Ascending aorta (tissue), 2 donors: ENCODE measurements at regions of chr4 and their contacts with region 1.

Region 1: GRCh38 chr4:82865592-82865991 is 25.4 kb downstream of the SEC31A start:
- DNase-seq: no peak
- H3K4me3 ChIP-seq: no peak overlapping the region
- H3K27ac ChIP-seq: peak overlapping the region; percentile 50 to 75
- H3K4me1 ChIP-seq: peaks cover 4 to 11% of the 10 kb centered on the region in 2 donors
- H3K27me3 ChIP-seq: no peaks in the 10 kb centered on the region
- CTCF ChIP-seq: no peak

Region 2: DNA sequence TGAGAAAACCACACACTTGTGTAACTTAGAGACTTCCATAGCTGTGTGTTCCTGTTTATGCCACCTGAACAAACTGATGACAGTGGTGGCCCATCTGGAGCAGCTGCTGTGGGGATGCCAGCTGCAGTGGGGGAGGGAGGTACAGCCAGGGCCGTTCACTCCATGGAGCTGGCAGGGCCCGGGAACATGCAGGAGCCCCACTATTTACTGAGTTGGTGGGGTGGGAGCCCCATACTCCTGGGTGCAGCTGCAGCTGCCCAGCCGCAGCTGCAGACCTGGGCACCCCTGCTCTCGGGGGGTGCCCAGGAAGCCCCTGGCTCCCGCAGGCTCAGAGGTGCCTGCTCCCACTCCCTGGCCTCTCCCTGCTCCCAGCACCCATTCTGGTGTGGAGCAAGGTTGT is 995.3 kb before region 1 on chr4:
- intact Hi-C with region 1: no loop called
- DNase-seq: no peak
- H3K4me3 ChIP-seq: no peak overlapping the region
- H3K27ac ChIP-seq: no peak overlapping the region
- H3K4me1 ChIP-seq: no peaks in the 10 kb centered on the region
- H3K27me3 ChIP-seq: no peaks in the 10 kb centered on the region
- CTCF ChIP-seq: no peak

Region 3: GRCh38 chr4:82825425-82825824 is 40.2 kb before region 1 on chr4:
- intact Hi-C with region 1: loop called (anchors 5 kb)
- DNase-seq: no peak
- H3K4me3 ChIP-seq: no peak overlapping the region
- H3K27ac ChIP-seq: no peak overlapping the region
- H3K4me1 ChIP-seq: no peaks in the 10 kb centered on the region
- H3K27me3 ChIP-seq: no peaks in the 10 kb centered on the region
- CTCF ChIP-seq: no peak

Region 4: DNA sequence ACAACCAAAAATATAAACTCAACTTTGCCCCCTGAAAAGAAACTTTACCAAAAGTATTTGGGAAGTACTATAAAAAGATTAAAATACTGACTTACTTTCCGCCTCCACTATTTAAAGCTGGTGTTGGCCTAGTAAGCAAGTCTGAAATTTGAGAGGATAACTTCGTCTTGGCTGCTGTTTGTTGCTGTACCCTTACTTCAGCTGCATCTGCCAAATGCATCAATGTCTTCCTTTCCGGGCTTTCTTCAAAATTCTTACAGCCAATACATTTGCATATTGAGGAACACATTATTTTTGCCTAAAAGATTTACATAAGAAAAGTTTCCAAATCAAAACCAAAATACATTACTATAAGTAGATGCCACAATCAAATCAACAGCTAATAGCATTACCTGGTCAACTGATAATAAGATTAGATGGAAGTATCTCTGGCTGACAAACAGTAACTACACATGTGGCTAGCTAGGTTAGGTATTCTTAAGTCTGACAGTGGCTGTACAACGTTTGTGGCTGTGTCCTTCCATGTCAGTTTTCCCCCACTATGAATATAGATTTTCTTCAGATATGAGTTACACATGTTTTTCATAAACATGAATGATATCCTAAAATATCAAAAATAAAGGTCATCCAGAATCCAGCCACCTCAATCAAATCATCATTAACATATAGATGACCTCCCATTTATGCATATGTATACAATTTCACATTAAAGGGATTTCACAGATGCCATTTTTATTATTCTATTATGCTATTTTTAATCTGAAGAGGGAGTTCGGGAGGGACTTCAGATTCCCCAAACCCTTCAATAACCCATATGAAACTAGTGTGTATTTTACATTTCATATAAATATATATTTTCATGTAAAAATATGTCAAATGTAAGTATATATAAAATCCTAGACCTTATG is 65.5 kb after region 1 on chr4:
- intact Hi-C with region 1: no loop called
- DNase-seq: no peak
- H3K4me3 ChIP-seq: no peak overlapping the region
- H3K27ac ChIP-seq: no peak overlapping the region
- H3K4me1 ChIP-seq: no peaks in the 10 kb centered on the region
- H3K27me3 ChIP-seq: no peaks in the 10 kb centered on the region
- CTCF ChIP-seq: no peak

Region 5: GRCh38 chr4:82984459-82984858 is 118.9 kb after region 1 on chr4:
- intact Hi-C with region 1: no loop called
- DNase-seq: no peak
- H3K4me3 ChIP-seq: no peak overlapping the region
- H3K27ac ChIP-seq: no peak overlapping the region
- H3K4me1 ChIP-seq: no peaks in the 10 kb centered on the region
- H3K27me3 ChIP-seq: no peaks in the 10 kb centered on the region
- CTCF ChIP-seq: no peak